PC-3 (cell line): ENCODE measurements at regions of chr10 and their contacts with region 1.

Region 1: GRCh38 chr10:77943121-77943901 is 16.8 kb upstream of the DLG5 start:
- DNase-seq: peak; percentile 99
- ATAC-seq: peak; percentile 69
- H3K4me3 ChIP-seq: peak overlapping the region; percentile 4; the same call in 1 of the 2 replicates
- H3K27ac ChIP-seq: peak overlapping the region; percentile 72
- H3K4me1 ChIP-seq: peaks cover 32% of the 10 kb centered on the region
- H3K27me3 ChIP-seq: no peaks in the 10 kb centered on the region
- CTCF ChIP-seq: no peak

Region 2: GRCh38 chr10:77873536-77874380 is 69.6 kb before region 1 on chr10:
- CTCF ChIA-PET with region 1: no interaction called
- POLR2A ChIA-PET with region 1: interaction called, 12 read pairs
- intact Hi-C with region 1: no loop called
- DNase-seq: peak; percentile 99
- ATAC-seq: peak; percentile 90
- H3K4me3 ChIP-seq: peak overlapping the region; percentile 0; the same call in 1 of the 2 replicates
- H3K27ac ChIP-seq: peak overlapping the region; percentile 63
- H3K4me1 ChIP-seq: peaks cover 26% of the 10 kb centered on the region
- H3K27me3 ChIP-seq: no peaks in the 10 kb centered on the region
- CTCF ChIP-seq: peak; percentile 18; the same call in 1 of the 2 replicates

Region 3: DNA sequence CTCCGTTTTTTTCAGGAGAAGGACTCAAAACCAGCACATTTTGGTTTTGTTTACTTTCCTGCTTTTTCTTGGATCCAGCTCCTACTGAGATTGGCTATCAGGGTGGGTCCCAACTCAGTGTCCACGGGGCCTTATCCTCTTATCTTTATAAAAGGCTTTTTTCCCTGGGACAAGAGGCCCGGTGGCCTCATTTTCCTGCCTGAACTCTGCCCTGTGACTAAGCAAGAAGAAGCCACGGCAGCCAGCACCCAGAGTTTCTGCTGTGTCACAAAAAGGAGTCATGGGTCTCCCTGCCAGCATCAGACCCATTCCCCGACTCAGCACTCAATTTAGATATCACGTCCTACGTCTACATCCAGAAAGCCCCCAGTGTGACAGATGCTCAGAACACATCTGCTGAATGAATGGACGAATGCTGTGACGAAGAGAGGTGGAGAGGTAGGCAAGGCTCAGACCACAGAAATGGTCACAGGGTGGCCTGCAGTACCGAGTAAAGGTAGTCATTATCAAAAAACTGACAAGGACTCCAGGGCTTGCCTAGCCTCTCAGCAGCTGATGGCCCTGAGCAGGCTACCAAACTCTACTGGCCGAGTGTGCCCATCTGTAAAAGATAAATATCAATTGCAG is 33.4 kb before region 1 on chr10:
- CTCF ChIA-PET with region 1: no interaction called
- POLR2A ChIA-PET with region 1: interaction called, 11 read pairs
- intact Hi-C with region 1: no loop called
- DNase-seq: peak; percentile 78
- ATAC-seq: 0 out of 2 replicates have a peak, but pooled peaks have one; percentile 6
- H3K4me3 ChIP-seq: no peak overlapping the region
- H3K27ac ChIP-seq: peak overlapping the region; percentile 8
- H3K4me1 ChIP-seq: peaks cover 25% of the 10 kb centered on the region
- H3K27me3 ChIP-seq: no peaks in the 10 kb centered on the region
- CTCF ChIP-seq: no peak

Region 4: DNA sequence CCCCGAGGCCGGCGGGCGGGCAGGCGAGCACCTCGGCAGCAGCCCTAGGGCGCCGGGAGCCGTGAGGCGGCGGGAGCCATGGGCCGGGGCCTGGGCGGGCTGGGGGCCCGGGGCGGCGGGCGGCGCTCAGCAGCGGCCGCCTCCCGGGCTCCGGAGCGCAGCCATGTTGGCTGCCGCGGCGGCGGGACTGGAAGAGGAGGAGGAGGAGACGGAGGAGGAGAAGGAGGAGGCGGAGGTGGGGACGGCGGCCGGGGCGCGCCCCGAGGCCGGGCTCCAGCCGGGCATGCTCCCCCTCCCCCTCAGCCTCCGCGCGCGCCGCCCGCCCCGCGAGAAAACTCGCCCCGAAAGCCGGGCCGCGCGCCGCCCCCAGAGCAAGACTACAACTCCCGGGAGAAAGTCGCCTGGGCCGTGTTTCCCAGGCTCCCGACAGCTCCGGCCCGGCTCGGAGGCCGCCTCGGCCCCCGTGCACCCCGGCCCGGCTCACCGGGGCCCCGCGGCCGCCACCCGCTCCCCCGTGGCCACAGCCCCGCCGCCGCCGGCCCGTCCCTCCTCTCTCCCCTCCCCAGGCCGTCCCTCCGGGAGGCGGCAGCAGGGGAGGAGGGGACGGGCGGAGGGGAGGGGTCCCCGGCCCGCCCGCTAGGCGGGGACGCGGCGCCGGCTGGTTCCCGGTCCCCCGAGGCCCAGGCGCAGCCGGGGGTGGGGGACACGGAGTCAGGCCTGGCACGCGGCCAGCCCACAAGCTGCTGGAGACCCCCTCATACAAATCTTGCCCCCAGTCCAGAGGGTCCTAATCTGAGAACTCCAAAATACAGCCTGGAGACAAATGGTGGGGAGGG is 16.5 kb before region 1 on chr10 and contains the start of gene DLG5:
- CTCF ChIA-PET with region 1: no interaction called
- POLR2A ChIA-PET with region 1: interaction called, 5 read pairs
- intact Hi-C with region 1: loop called (anchors 1 kb)
- DNase-seq: peak; percentile 89
- ATAC-seq: peak; percentile 77
- H3K4me3 ChIP-seq: peak within 1 kb of the TSS; percentile 74
- H3K27ac ChIP-seq: no peak within 1 kb of the TSS
- H3K4me1 ChIP-seq: peaks cover 39% of the 10 kb centered on the region
- H3K27me3 ChIP-seq: no peaks in the 10 kb centered on the region
- CTCF ChIP-seq: peak; percentile 34; the same call in 1 of the 2 replicates
- total RNA-seq, gene DLG5: 118 and 158 TPM in 2 replicates

Region 5: GRCh38 chr10:77965294-77965693 is 22.0 kb after region 1 on chr10:
- CTCF ChIA-PET with region 1: no interaction called
- POLR2A ChIA-PET with region 1: no interaction called
- intact Hi-C with region 1: loop called (anchors 1 kb)
- DNase-seq: peak; percentile 99
- ATAC-seq: peak; percentile 96
- H3K4me3 ChIP-seq: no peak overlapping the region
- H3K27ac ChIP-seq: peak overlapping the region; percentile 40
- H3K4me1 ChIP-seq: peaks cover 12% of the 10 kb centered on the region
- H3K27me3 ChIP-seq: no peaks in the 10 kb centered on the region
- CTCF ChIP-seq: no peak; the same call in 1 of the 2 replicates

Region 6: GRCh38 chr10:78023741-78024140 is 80.4 kb after region 1 on chr10:
- CTCF ChIA-PET with region 1: no interaction called
- POLR2A ChIA-PET with region 1: no interaction called
- intact Hi-C with region 1: no loop called
- DNase-seq: no peak
- ATAC-seq: no peak
- H3K4me3 ChIP-seq: no peak overlapping the region
- H3K27ac ChIP-seq: no peak overlapping the region
- H3K4me1 ChIP-seq: peaks cover 39% of the 10 kb centered on the region
- H3K27me3 ChIP-seq: no peaks in the 10 kb centered on the region
- CTCF ChIP-seq: no peak